A549 (cell line): ENCODE measurements at regions of chr4 and their contacts with region 1.

Region 1: GRCh38 chr4:3880615-3881120 is 114.5 kb downstream of the ADRA2C start:
- DNase-seq: peak; percentile 33 to 57
- ATAC-seq: peak; percentile 97 to 98
- H3K4me3 ChIP-seq: no peak overlapping the region
- H3K27ac ChIP-seq: no peak overlapping the region
- H3K4me1 ChIP-seq: no peaks in the 10 kb centered on the region
- CTCF ChIP-seq: peak; percentile 59
- EP300 ChIP-seq: no peak
- POLR2A ChIP-seq: no peak
- RAD21 ChIP-seq: peak; percentile 78 to 79

Region 2: GRCh38 chr4:3747581-3747904 is 133.1 kb before region 1 on chr4:
- CTCF ChIA-PET with region 1: interaction called, 12 read pairs
- POLR2A ChIA-PET with region 1: no interaction called
- DNase-seq: no peak
- ATAC-seq: no peak; a peak in 1 of 6 replicates
- H3K4me3 ChIP-seq: no peak overlapping the region
- H3K27ac ChIP-seq: no peak overlapping the region
- H3K4me1 ChIP-seq: no peaks in the 10 kb centered on the region; the same call in 2 of the 3 replicates
- CTCF ChIP-seq: no peak
- EP300 ChIP-seq: no peak
- POLR2A ChIP-seq: no peak
- RAD21 ChIP-seq: no peak

Region 3: DNA sequence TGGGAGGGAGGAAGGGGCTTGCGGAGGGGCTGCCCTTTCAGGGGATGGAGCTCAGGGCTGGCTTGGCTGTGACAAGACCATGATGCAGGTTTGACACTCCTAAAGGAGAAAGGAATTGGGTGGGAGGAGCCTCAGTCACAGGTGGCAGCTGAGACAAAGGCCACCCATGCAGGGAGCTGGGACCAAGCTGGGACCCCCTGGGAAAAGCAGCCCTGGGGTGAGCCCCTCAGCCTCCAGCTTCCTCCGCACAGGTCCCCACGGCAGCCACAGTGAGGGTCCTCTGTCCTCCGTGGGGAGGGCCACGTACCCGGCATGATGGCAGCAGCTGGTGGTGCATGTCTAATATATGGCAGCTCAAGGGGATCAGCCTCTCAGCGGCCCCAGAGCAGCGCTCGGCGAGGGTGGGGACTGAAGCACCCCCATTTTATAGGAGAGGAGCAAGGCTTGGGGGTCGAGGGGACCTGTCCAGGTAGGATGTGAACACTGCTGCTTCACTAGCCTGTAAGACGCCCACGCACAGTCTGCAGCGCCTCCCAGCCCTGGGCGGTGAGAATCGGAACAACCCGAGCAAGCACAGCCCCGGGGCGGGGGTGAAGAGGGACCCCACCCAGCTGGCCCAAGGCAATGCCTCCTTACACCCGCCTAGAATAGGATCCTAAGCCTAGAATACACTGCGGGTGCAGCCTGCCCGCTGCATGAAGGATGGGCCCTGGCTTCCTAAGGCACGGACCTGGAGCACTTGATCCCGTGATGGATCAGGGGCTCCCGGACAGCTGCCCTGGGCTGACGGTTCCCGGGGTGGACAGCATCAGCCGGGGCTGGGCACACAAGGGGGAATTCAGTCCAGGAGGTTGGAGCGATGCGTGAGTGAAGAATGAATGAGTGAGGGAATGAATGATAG is 97.0 kb before region 1 on chr4:
- CTCF ChIA-PET with region 1: interaction called, 12 read pairs
- POLR2A ChIA-PET with region 1: no interaction called
- DNase-seq: peak; percentile 31 to 32
- ATAC-seq: peak; percentile 57 to 82; a peak in 4 of 6 replicates
- H3K4me3 ChIP-seq: no peak overlapping the region
- H3K27ac ChIP-seq: no peak overlapping the region
- H3K4me1 ChIP-seq: peaks cover 19% of the 10 kb centered on the region; the same call in 2 of the 3 replicates
- CTCF ChIP-seq: peak; percentile 24; the same call in 2 of the 3 replicates
- EP300 ChIP-seq: no peak
- POLR2A ChIP-seq: no peak
- RAD21 ChIP-seq: peak; percentile 39 to 52; a peak in 3 of 5 replicates

Region 4: DNA sequence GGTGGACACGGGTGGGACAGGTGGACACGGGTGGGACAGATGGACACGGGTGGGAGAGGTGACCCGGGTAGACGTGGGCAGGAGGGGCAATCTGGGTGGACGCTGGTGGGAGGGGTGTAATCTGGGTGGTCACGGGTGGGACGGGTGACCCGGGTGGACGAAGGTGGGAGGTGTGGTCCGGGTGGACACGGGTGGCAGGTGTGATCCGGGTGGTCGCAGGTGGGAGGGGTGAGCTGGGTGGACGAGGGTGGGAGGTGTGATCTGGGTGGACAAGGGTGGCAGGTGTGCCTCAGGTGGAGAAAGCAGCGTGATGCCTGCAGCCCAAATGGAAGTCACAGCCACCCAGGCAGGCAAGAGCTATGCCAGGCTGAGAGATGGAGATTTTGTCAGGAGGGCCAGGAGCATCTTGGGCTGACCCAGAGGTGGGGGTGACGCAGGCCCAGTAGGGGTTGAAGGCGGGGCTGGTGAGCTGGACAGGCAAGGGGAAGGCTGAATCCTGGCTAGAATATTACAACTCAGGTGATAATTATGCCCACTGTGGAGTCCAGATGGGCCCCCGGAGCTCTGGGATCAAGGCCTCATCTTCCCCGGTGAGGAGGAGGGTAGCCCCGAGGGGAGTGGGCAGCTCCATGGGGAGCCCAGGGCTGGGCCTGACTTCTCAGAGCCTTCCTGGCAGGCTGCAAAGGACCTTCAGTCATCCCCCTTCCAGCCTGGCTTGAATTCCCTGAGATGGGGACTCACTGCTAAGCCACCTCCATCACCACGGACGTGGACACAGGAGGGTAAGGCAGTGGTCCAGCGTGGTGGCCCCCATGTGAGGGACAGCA is 14.5 kb before region 1 on chr4:
- CTCF ChIA-PET with region 1: interaction called, 13 read pairs
- POLR2A ChIA-PET with region 1: no interaction called
- DNase-seq: no peak
- ATAC-seq: no peak
- H3K4me3 ChIP-seq: no peak overlapping the region
- H3K27ac ChIP-seq: no peak overlapping the region
- H3K4me1 ChIP-seq: no peaks in the 10 kb centered on the region
- CTCF ChIP-seq: no peak
- EP300 ChIP-seq: no peak
- POLR2A ChIP-seq: no peak
- RAD21 ChIP-seq: no peak